ENCODE measurements at regions of chr7 and their contacts with region 1.

Region 1: GRCh38 chr7:10156972-10157371 is 816.7 kb upstream of the PHF14 start:
- DNase-seq: no peak
- H3K4me3 ChIP-seq: no peak overlapping the region
- H3K27ac ChIP-seq: no peak overlapping the region
- H3K4me1 ChIP-seq: no peaks in the 10 kb centered on the region
- H3K27me3 ChIP-seq: no peaks in the 10 kb centered on the region
- CTCF ChIP-seq: no peak
- EP300 ChIP-seq: no peak
- POLR2A ChIP-seq: no peak

Region 2: GRCh38 chr7:8343556-8343955 is 1813.4 kb before region 1 on chr7:
- in situ Hi-C with region 1: no loop called
- intact Hi-C with region 1: loop called (anchors 10 kb)
- DNase-seq: no peak
- H3K4me3 ChIP-seq: no peak overlapping the region
- H3K27ac ChIP-seq: no peak overlapping the region
- H3K4me1 ChIP-seq: no peaks in the 10 kb centered on the region
- H3K27me3 ChIP-seq: no peaks in the 10 kb centered on the region
- CTCF ChIP-seq: no peak
- EP300 ChIP-seq: no peak
- POLR2A ChIP-seq: no peak